Pancreas (tissue), 10 donors: ENCODE measurements at regions of chr10 and their contacts with region 1.

Region 1: DNA sequence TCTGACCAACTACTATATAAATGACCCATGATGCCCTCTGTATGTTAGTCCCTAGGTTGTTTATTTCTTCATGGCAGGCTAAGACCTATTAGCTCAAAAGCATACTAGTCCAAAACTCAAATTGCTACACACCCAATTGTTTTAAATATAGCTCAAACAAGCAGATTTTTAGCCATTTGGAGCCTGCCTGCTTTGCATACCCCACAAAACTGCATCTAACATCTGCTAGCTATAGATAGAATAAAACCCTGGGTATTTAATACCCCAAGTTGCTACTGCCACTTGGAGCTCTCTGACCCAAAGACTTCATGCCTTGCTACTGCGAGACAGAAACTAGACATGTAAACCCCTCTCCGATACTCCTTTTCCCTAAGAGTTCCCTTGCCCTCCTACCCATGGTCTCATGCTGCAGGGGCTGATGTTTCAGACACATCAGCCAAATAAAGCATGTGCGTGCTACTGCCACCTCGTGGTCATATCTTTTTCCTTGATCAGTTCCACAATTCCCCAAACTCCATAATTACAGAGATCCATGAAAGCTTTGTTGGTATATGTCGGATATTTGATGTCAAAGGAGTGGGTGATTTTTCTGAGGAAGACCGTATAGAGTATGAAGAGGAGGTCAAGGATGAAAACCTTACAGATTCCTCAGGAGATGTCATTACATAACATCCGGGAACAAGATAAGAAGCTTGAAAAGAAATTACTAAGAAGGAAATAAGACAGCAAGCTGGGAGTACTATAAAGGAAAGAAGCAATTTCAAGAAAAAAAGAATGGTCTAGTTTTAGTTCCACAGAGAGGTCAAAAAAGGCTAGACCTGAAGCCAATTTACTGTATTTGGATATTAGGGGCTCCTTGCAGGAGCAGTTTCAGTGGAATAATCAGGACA is 386.6 kb downstream of the SH2D4B start:
- DNase-seq: peak in 4 of 6 donors; percentile 15 to 57 (median 40)
- ATAC-seq: peak; percentile 48 to 74 (median 73)
- H3K4me3 ChIP-seq: no peak overlapping the region
- H3K27ac ChIP-seq: no peak overlapping the region
- H3K4me1 ChIP-seq: no peaks in the 10 kb centered on the region
- H3K27me3 ChIP-seq: peaks cover 0 to 4% (median 0%) of the 10 kb centered on the region in 4 donors
- CTCF ChIP-seq: peak; percentile 40 to 65 (median 58)

Region 2: DNA sequence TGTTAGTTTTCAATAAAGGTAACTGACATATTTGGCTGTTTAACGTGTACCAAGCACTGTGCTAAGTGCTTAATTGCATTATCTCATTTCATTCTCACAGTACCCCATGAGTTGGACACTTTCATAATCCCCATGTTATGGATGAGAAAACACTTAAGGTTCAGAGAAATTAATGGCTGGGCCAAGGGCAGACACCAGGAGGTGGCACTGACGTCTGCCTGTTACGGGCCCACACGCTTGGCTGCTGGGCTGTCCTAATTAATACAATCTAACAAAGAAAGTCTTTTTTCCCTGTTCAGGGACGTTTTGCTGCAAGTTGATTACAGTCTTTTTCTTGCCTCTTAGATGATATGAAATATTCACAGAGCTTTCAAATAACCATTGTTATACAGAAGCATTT is 551.6 kb before region 1 on chr10:
- intact Hi-C with region 1: loop called in 1 of 3 experiments (anchors 10 kb)
- DNase-seq: no peak
- ATAC-seq: peak in 1 of 4 donors; percentile 49
- H3K4me3 ChIP-seq: no peak overlapping the region
- H3K27ac ChIP-seq: no peak overlapping the region
- H3K4me1 ChIP-seq: peaks cover 0 to 6% (median 0%) of the 10 kb centered on the region in 3 donors
- H3K27me3 ChIP-seq: no peaks in the 10 kb centered on the region
- CTCF ChIP-seq: no peak

Region 3: DNA sequence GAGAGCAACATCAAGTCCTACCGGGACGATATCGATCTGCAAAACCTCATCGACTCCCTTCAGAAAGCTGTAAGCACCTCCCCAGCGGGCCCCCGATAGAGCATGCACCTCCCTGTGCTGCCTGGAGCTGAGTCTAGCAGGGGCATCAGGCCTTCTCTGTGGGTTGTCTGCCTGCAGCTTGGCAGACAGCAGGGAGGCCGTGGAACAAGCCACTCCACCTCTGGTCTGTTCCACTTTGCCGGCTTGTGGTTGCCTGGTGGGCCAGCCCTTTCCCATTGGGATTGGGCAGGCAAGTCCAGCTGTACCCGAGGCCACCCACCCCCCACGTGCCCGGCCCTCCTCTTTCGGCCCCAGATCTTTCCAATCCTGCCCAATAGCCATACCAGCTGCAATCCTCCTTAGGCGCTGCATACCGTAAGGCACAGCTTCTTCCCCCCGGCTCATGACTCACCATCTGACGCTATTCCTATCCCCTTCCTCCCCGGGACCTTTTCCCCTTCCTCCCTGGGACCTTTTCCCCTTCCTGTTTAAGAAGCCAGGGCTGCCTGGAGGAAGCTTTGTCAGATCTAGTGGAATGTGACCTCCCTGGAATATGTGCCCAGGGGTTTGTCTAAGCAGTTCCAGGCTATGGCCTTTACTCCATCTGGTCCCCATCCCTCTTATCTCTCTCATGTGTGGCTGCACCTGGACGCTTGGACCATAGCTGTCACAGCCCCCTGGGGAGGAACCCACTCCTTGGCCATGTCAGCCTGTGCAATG is 414.7 kb before region 1 on chr10:
- intact Hi-C with region 1: no loop called
- DNase-seq: no peak
- ATAC-seq: peak in 1 of 4 donors; percentile 13
- H3K4me3 ChIP-seq: no peak overlapping the region
- H3K27ac ChIP-seq: no peak overlapping the region
- H3K4me1 ChIP-seq: peaks cover under 1 to 17% (median 6%) of the 10 kb centered on the region in 3 donors
- H3K27me3 ChIP-seq: no peaks in the 10 kb centered on the region
- CTCF ChIP-seq: no peak

Region 4: DNA sequence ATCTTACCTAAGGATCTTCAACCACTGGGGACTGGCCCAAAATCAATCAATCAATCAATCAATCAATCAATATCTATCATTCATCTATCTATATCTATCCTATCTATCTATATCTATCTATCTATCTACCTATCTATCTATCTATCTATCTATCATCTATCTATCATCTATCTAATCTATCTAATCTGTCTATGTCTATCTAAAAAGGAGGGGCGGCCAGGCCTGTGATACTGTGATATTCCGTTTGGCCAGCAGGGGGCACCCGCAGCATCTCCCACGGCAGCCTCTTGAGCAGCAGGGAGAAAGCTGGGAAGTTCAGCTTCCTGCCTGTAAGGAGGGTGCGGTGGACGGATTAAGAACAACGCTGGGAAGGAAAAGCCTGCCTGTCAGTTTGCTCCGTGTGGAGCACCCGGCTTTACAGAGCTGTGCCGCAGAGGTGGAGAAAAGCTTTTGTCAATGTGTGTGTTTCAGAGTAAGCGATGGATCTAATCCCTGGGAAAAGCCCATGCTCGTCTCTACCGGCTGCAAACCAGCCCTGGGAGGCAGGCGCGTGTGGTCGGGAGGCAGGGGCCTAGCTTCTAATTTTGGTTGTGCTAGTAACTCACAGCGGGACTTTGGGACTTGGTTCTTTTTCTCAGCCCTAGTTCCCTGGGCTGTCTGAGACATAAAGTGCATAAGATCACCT is 261.6 kb before region 1 on chr10:
- intact Hi-C with region 1: loop called in 1 of 3 experiments (anchors 10 kb)
- DNase-seq: peak; percentile 67 to 90 (median 82)
- ATAC-seq: peak; percentile 89 to 95 (median 93)
- H3K4me3 ChIP-seq: peak overlapping the region in 2 of 4 donors; percentile 25 to 32
- H3K27ac ChIP-seq: no peak overlapping the region
- H3K4me1 ChIP-seq: peaks cover 0 to 11% (median 5%) of the 10 kb centered on the region in 3 donors
- H3K27me3 ChIP-seq: no peaks in the 10 kb centered on the region
- CTCF ChIP-seq: peak; percentile 71 to 93 (median 84)